ENCODE measurements at regions of chr3 and their contacts with region 1.

Region 1: GRCh38 chr3:128969993-128970739 is 23.7 kb downstream of the CFAP92 start:
- DNase-seq: peak in 1 of 2 experiments; percentile 62
- H3K4me3 ChIP-seq: no peak overlapping the region
- H3K4me3 Mint-ChIP-seq: no peak overlapping the region
- H3K27ac Mint-ChIP-seq: no peak overlapping the region
- H3K4me1 ChIP-seq: no peaks in the 10 kb centered on the region
- H3K4me1 Mint-ChIP-seq: no peaks in the 10 kb centered on the region
- H3K27me3 ChIP-seq: no peaks in the 10 kb centered on the region
- H3K27me3 Mint-ChIP-seq: peaks cover 1% of the 10 kb centered on the region
- CTCF ChIP-seq: peak; percentile 89 to 97

Region 2: DNA sequence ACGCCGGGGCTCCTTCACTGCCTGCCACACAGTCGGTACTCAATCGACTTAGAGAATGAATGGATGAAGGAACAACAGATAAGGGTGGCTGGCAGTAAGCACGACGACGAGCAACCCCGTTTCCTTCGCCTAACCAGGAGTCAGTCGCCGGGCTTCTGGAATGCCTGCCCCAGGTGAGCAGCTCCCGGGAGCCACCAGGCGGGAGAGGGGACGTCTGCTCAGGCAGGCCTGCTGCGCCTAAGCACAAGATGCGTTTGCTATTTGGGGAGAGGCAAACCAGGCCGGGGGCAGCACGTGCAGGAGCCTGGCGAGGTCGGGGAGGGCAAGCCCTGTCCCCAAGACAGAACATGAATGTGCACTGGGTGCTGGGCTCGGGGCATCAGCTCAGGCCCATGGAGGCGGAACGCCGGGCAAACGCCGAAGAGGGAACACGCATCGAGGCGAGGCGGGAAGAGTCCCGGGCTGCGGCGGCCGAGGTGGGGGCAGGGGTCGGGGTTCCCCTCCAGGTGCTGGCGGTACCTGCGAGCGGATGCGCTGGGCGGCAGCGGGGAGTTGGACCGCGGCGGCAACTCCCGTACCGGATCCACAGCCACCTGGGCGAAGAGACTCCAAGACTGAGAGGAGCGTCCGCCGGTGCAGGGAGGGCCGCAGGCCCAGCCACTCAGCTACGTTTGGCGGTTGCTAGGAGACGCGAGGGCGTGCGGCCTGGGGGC is 23.5 kb after region 1 on chr3 and contains the start of gene CFAP92:
- CTCF ChIA-PET with region 1: interaction called, 13 read pairs
- POLR2A ChIA-PET with region 1: interaction called, 7 read pairs
- intact Hi-C with region 1: no loop called
- DNase-seq: peak; percentile 82 to 89
- H3K4me3 ChIP-seq: peak within 1 kb of the TSS; percentile 35
- H3K4me3 Mint-ChIP-seq: peak within 1 kb of the TSS; percentile 70
- H3K27ac Mint-ChIP-seq: peak within 1 kb of the TSS; percentile 50
- H3K4me1 ChIP-seq: peaks cover 5% of the 10 kb centered on the region; the same call in 1 of the 2 replicates
- H3K4me1 Mint-ChIP-seq: peaks cover 6% of the 10 kb centered on the region
- H3K27me3 ChIP-seq: no peaks in the 10 kb centered on the region
- H3K27me3 Mint-ChIP-seq: no peaks in the 10 kb centered on the region
- CTCF ChIP-seq: no peak
- total RNA-seq, gene CFAP92: 4.5 and 5.9 TPM in 2 replicates

Region 3: GRCh38 chr3:129016356-129016719 is 46.2 kb after region 1 on chr3:
- CTCF ChIA-PET with region 1: interaction called, 17 read pairs
- POLR2A ChIA-PET with region 1: no interaction called
- intact Hi-C with region 1: loop called (anchors 5 kb)
- DNase-seq: peak in 1 of 2 experiments; percentile 30
- H3K4me3 ChIP-seq: no peak overlapping the region
- H3K4me3 Mint-ChIP-seq: no peak overlapping the region
- H3K27ac Mint-ChIP-seq: no peak overlapping the region
- H3K4me1 ChIP-seq: peaks cover 11% of the 10 kb centered on the region; the same call in 1 of the 2 replicates
- H3K4me1 Mint-ChIP-seq: no peaks in the 10 kb centered on the region
- H3K27me3 ChIP-seq: no peaks in the 10 kb centered on the region
- H3K27me3 Mint-ChIP-seq: no peaks in the 10 kb centered on the region
- CTCF ChIP-seq: no peak

Region 4: GRCh38 chr3:129052675-129053074 is 82.5 kb after region 1 on chr3:
- CTCF ChIA-PET with region 1: interaction called, 31 read pairs
- POLR2A ChIA-PET with region 1: no interaction called
- intact Hi-C with region 1: no loop called
- DNase-seq: no peak
- H3K4me3 ChIP-seq: no peak overlapping the region
- H3K4me3 Mint-ChIP-seq: peak overlapping the region; percentile 40
- H3K27ac Mint-ChIP-seq: peak overlapping the region; percentile 16
- H3K4me1 ChIP-seq: peaks cover 35% of the 10 kb centered on the region
- H3K4me1 Mint-ChIP-seq: peaks cover 16% of the 10 kb centered on the region
- H3K27me3 ChIP-seq: no peaks in the 10 kb centered on the region
- H3K27me3 Mint-ChIP-seq: no peaks in the 10 kb centered on the region
- CTCF ChIP-seq: no peak

Region 5: GRCh38 chr3:129106331-129106730 is 136.2 kb after region 1 on chr3:
- CTCF ChIA-PET with region 1: interaction called, 12 read pairs
- POLR2A ChIA-PET with region 1: no interaction called
- intact Hi-C with region 1: loop called (anchors 10 kb)
- DNase-seq: peak; percentile 37 to 45
- H3K4me3 ChIP-seq: no peak overlapping the region
- H3K4me3 Mint-ChIP-seq: no peak overlapping the region
- H3K27ac Mint-ChIP-seq: no peak overlapping the region
- H3K4me1 ChIP-seq: no peaks in the 10 kb centered on the region
- H3K4me1 Mint-ChIP-seq: no peaks in the 10 kb centered on the region
- H3K27me3 ChIP-seq: no peaks in the 10 kb centered on the region
- H3K27me3 Mint-ChIP-seq: no peaks in the 10 kb centered on the region
- CTCF ChIP-seq: no peak

Region 6: GRCh38 chr3:129160891-129161859 is 191.0 kb after region 1 on chr3 and contains the start of gene ISY1:
- CTCF ChIA-PET with region 1: interaction called, 13 read pairs
- POLR2A ChIA-PET with region 1: no interaction called
- intact Hi-C with region 1: loop called (anchors 1 kb)
- DNase-seq: peak; percentile 90 to 91
- H3K4me3 ChIP-seq: peak within 1 kb of the TSS; percentile 59
- H3K4me3 Mint-ChIP-seq: peak within 1 kb of the TSS; percentile 89
- H3K27ac Mint-ChIP-seq: peak within 1 kb of the TSS; percentile 99
- H3K4me1 ChIP-seq: peaks cover 15% of the 10 kb centered on the region
- H3K4me1 Mint-ChIP-seq: peaks cover 12% of the 10 kb centered on the region
- H3K27me3 ChIP-seq: no peaks in the 10 kb centered on the region
- H3K27me3 Mint-ChIP-seq: no peaks in the 10 kb centered on the region
- CTCF ChIP-seq: peak; percentile 59 to 87
- total RNA-seq, gene ISY1: 35.6 and 37.6 TPM in 2 replicates

Measured in Caco-2 (cell line).